ENCODE measurements at regions of chr1 and their contacts with region 1.

Region 1: DNA sequence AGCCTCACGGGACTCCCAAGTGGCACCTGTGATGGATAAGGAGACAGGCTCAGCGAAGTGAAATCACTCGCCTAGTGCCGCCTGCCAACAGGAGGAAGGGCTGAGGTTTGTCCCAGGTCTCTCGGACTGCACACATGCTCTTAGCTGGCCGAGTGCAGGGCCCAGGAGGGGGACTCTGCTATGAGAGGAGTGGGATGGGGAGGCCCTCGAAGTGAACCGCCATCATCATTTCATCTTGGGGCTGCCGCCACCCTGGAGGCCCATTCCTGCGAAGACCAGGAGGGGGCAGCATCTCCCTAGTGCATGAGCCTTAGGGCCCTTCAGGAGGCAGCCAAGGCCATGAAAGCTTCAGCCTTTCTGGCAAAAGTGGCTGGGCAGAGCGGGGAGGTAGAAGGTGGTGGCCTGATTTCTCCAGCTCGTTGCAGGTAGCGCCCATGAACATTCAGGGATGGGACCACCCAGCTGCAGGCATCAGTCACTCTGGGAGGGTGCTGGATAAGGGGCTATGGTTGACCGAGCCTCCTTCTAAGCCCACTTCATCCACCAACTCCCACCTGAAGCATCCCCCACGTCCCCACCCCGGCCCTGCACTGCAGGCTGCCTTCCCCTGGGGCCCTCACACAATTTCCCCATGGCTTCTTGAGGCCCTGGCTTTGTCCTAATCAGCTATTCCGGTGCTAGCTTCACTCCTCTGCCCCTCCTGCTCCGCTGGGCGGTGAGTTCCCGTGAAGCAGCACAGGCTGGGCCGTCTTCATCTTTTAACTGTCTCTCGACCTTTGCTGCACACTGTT is 17.2 kb upstream of the RASSF5 start:
- DNase-seq: peak; percentile 62 to 95
- H3K4me3 ChIP-seq: no peak overlapping the region
- CTCF ChIP-seq: peak in 1 of 3 donors; percentile 90
- POLR2A ChIP-seq: no peak

Region 2: GRCh38 chr1:205543411-205544301 is 946.5 kb before region 1 on chr1:
- intact Hi-C with region 1: no loop called
- DNase-seq: peak; percentile 68 to 94
- H3K4me3 ChIP-seq: no peak overlapping the region
- CTCF ChIP-seq: no peak
- POLR2A ChIP-seq: no peak

Region 3: GRCh38 chr1:206030714-206031113 is 459.5 kb before region 1 on chr1:
- intact Hi-C with region 1: no loop called
- DNase-seq: peak in 1 of 2 donors; percentile 52
- H3K4me3 ChIP-seq: no peak overlapping the region
- CTCF ChIP-seq: no peak
- POLR2A ChIP-seq: no peak

Region 4: GRCh38 chr1:206075786-206076755 is 414.1 kb before region 1 on chr1:
- intact Hi-C with region 1: no loop called
- DNase-seq: peak in 1 of 2 donors; percentile 69
- H3K4me3 ChIP-seq: no peak overlapping the region
- CTCF ChIP-seq: no peak
- POLR2A ChIP-seq: no peak

Region 5: GRCh38 chr1:206583707-206584648 is 93.8 kb after region 1 on chr1:
- intact Hi-C with region 1: loop called (anchors 5 kb)
- DNase-seq: peak; percentile 75 to 96
- H3K4me3 ChIP-seq: no peak overlapping the region
- CTCF ChIP-seq: peak in 1 of 3 donors; percentile 63
- POLR2A ChIP-seq: no peak

Region 6: DNA sequence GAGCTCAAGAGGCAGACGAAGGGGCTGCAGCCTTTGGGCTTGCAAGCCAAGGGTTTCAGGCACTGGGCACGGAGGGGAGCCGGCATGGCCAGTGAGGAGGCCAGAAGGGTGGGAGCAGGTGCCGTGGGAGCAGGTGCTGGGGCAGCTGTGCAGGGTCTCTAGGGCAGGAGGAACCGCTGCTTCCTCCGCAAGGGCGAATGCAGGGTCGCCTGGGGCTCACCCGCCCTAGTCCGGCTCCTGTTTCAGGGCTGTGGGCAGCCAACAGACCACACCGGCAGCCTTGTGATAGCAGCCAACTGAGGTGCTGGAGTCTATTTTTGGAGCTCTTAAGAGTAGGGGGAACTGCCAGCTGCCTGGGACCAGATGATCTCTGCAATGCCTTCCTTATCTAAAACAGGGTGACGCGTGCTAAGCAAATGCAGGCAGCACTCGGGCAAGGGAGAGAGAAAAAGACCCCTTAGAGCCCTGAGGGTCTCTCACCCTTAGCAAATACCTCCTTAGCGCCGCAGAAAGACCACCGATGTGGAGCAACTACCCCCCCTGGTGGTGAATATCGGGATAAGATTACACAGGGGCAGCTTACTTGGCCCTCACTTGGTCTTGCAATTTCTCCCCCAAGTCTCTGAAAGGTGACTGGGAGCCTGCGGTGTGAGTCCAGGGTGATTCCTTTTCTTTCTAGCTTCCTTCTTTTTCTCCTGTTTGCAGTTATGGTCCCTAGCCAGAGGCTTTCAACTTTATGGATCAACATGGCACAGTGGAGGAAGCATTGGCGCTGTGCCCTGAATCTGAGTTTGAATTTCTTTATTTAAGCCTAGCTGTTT is 173.9 kb after region 1 on chr1:
- intact Hi-C with region 1: loop called (anchors 5 kb)
- DNase-seq: peak; percentile 68 to 89
- H3K4me3 ChIP-seq: no peak overlapping the region
- CTCF ChIP-seq: peak in 1 of 3 donors; percentile 75
- POLR2A ChIP-seq: no peak

Measured in lower leg skin (tissue), 4 donors.